Heart right ventricle (tissue), 16 donors: ENCODE measurements at regions of chr3 and their contacts with region 1.

Region 1: GRCh38 chr3:120908795-120909601 is 993 bp downstream of the STXBP5L start:
- DNase-seq: no peak
- ATAC-seq: no peak
- H3K4me3 ChIP-seq: peak overlapping the region in 9 of 10 donors; percentile 12 to 49 (median 38)
- H3K27ac ChIP-seq: no peak overlapping the region
- H3K4me1 ChIP-seq: peaks cover 0 to 18% (median 11%) of the 10 kb centered on the region in 9 donors
- H3K27me3 ChIP-seq: peaks cover 0 to 76% (median 68%) of the 10 kb centered on the region in 7 donors
- CTCF ChIP-seq: no peak

Region 2: GRCh38 chr3:120931593-120931992 is 22.6 kb after region 1 on chr3:
- intact Hi-C with region 1: loop called in 1 of 10 experiments (anchors 1 kb)
- DNase-seq: no peak
- ATAC-seq: no peak
- H3K4me3 ChIP-seq: no peak overlapping the region
- H3K27ac ChIP-seq: no peak overlapping the region
- H3K4me1 ChIP-seq: no peaks in the 10 kb centered on the region
- H3K27me3 ChIP-seq: no peaks in the 10 kb centered on the region
- CTCF ChIP-seq: no peak